Testis (tissue), 5 donors: ENCODE measurements at regions of chr3 and their contacts with region 1.

Region 1: DNA sequence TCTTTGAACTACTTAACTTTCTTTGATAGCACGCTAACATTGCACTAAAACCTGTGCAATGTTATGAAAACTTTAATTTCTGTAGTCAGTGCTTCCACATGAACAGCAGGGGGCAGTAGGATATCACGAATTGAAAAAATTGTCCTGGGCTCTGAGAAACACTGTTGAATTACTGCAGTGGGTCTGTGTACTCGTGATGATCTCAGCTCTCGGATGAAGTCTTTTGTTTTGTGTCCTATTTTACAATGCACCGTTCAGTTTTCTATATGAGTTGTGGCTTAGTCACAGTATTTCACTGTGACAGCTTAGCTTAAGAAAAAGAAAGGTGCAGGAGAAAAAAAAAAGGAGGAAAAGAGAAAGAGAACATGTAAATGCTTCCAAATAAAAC is 141.3 kb upstream of the CCDC54 start:
- DNase-seq: peak; percentile 54
- H3K4me3 ChIP-seq: peak overlapping the region; percentile 53 to 57
- H3K27ac ChIP-seq: peak overlapping the region; percentile 82 to 84
- H3K4me1 ChIP-seq: peaks cover 20% of the 10 kb centered on the region
- H3K27me3 ChIP-seq: no peaks in the 10 kb centered on the region
- CTCF ChIP-seq: peak; percentile 90 to 97 (median 96)
- POLR2A ChIP-seq: no peak

Region 2: GRCh38 chr3:107522510-107523288 is 286.8 kb after region 1 on chr3 and contains the start of gene BBX:
- intact Hi-C with region 1: no loop called
- DNase-seq: peak; percentile 97
- H3K4me3 ChIP-seq: peak within 1 kb of the TSS; percentile 93 to 97
- H3K27ac ChIP-seq: peak within 1 kb of the TSS; percentile 97 to 98
- H3K4me1 ChIP-seq: peaks cover 7% of the 10 kb centered on the region
- H3K27me3 ChIP-seq: no peaks in the 10 kb centered on the region
- CTCF ChIP-seq: no peak
- POLR2A ChIP-seq: peak; percentile 75
- total RNA-seq, gene BBX: 312 to 317 TPM

Region 3: DNA sequence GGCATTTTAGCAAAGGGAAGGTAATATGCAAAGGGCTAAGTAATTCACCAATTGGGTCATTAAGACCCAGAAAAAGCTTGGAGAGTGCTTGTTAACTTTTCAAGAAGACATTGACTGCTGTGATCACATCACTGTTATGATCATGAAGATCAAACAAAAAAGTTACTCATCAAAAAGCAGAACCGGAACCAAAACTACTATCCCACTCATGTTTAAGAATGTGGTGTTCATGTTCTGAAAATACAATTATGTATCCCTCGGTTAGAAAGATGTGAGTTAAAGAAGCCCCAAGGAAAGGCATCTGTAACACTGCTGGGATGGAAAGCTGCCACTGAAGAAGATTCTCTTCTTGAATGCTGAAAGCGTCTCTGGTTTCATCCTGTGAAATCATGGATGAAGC is 319.4 kb after region 1 on chr3:
- intact Hi-C with region 1: no loop called
- DNase-seq: no peak
- H3K4me3 ChIP-seq: no peak overlapping the region
- H3K27ac ChIP-seq: no peak overlapping the region
- H3K4me1 ChIP-seq: no peaks in the 10 kb centered on the region
- H3K27me3 ChIP-seq: no peaks in the 10 kb centered on the region
- CTCF ChIP-seq: no peak
- POLR2A ChIP-seq: no peak

Region 4: DNA sequence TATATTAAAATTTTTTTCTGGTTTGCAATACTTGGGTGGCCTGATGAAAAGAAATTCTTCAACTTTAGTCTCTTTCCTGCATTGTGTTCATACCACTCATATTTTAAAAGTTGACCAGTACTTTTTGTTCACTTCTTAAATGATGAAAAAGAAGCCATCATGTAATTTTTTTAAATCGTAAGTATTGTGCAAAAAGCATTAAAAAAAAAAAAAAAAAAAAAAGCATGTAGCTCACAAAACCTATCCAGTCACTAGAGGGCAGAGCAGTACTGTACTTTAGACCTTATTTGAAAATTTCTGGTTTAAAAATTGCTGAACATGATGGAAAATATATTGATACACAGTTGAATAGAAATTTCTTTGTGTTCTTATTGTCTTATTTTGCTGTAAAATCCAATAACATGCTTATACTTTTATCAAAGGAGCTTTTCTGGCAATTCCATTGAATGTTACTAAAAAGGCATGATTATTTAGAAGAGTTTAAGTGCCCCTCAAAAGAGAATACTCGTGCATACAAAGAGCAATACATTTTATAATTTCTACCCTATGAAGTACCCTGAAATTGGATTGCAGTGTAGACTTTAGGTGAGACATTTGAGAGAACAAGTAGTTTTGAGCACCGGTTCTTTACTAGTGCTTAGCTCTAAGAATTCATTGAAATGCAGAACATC is 424.5 kb after region 1 on chr3:
- intact Hi-C with region 1: loop called (anchors 10 kb)
- DNase-seq: no peak
- H3K4me3 ChIP-seq: no peak overlapping the region
- H3K27ac ChIP-seq: peak overlapping the region in 1 of 2 donors; percentile 10
- H3K4me1 ChIP-seq: peaks cover 36% of the 10 kb centered on the region
- H3K27me3 ChIP-seq: no peaks in the 10 kb centered on the region
- CTCF ChIP-seq: peak in 2 of 3 experiments; percentile 39 to 57
- POLR2A ChIP-seq: no peak